K562 (cell line): ENCODE measurements at regions of chr15 and their contacts with region 1.

Region 1: DNA sequence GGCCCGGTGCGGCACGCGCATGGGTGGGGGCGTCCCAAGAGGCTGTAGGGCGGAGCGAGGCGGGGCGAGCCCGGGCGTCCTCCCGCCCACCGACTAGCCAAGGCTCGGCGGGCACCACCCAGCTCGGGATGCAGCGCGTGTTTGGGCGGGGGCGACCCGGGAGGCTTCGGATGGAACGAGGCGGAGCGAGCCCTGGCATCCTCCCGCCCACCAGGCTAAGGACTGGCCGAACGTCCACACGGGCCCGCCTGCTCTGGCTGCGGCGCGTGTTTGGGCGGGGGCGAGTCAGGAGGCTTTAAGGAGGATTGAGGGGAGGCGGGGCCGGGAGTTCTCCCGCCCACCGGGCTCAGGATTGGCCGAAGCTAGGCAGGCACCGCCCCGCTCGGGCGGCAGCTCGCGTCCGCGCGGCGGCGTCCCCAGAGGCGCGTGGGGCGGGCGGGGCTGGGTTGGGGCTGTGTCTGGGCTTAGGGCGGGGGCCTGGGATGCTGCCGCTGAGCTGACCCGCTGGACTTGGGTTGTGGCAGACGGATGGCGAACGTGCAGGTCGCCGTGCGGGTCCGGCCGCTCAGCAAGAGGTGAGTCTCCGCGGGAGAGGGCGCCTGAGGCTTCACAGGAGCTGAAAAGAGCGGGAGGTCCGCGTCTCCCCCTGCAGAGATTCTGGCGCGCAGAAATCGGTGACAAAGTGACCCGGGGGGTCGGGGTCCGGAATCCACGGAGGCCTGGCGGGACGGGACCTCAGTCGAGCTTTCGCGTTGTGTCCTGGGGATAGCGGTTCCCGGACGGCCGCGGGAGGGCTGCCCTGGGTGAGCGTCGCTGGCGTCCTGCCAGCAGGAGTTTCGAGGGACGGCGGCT is at the start of gene STARD9:
- DNase-seq: peak; percentile 94 to 98 (median 96)
- ATAC-seq: peak; percentile 96
- H3K4me3 ChIP-seq: peak within 1 kb of the TSS; percentile 51
- H3K27ac ChIP-seq: peak within 1 kb of the TSS; percentile 69
- H3K4me1 ChIP-seq: peaks cover 18 to 28% of the 10 kb centered on the region in 2 experiments; a peak in 4 of 5 replicates
- H3K27me3 ChIP-seq: no peaks in the 10 kb centered on the region
- CTCF ChIP-seq: no peak
- EP300 ChIP-seq: no peak
- POLR2A ChIP-seq: peak; percentile 74
- RAD21 ChIP-seq: no peak; a peak in 1 of 4 replicates
- polyA plus RNA-seq, gene STARD9: 0.45 to 0.71 TPM

Region 2: GRCh38 chr15:42465520-42466259 is 109.7 kb before region 1 on chr15:
- CTCF ChIA-PET with region 1: no interaction called
- POLR2A ChIA-PET with region 1: no interaction called
- in situ Hi-C with region 1: no loop called
- intact Hi-C with region 1: no loop called
- DNase-seq: no peak
- ATAC-seq: no peak
- H3K4me3 ChIP-seq: no peak overlapping the region
- H3K27ac ChIP-seq: no peak overlapping the region
- H3K4me1 ChIP-seq: no peaks in the 10 kb centered on the region
- H3K27me3 ChIP-seq: no peaks in the 10 kb centered on the region
- CTCF ChIP-seq: no peak
- EP300 ChIP-seq: no peak
- POLR2A ChIP-seq: no peak
- RAD21 ChIP-seq: no peak

Region 3: GRCh38 chr15:42558739-42559138 is 16.7 kb before region 1 on chr15:
- CTCF ChIA-PET with region 1: no interaction called
- POLR2A ChIA-PET with region 1: interaction called, 26 read pairs
- in situ Hi-C with region 1: no loop called
- intact Hi-C with region 1: no loop called
- DNase-seq: no peak
- ATAC-seq: no peak
- H3K4me3 ChIP-seq: no peak overlapping the region
- H3K27ac ChIP-seq: no peak overlapping the region
- H3K4me1 ChIP-seq: peaks cover 0 to under 1% of the 10 kb centered on the region in 2 experiments; a peak in 1 of 5 replicates
- H3K27me3 ChIP-seq: no peaks in the 10 kb centered on the region
- CTCF ChIP-seq: no peak
- EP300 ChIP-seq: no peak
- POLR2A ChIP-seq: no peak
- RAD21 ChIP-seq: no peak

Region 4: GRCh38 chr15:42650208-42651066 is 75.0 kb after region 1 on chr15:
- CTCF ChIA-PET with region 1: no interaction called
- POLR2A ChIA-PET with region 1: no interaction called
- in situ Hi-C with region 1: no loop called
- intact Hi-C with region 1: loop called (anchors 2 kb)
- DNase-seq: peak; percentile 57 to 85 (median 68)
- ATAC-seq: peak; percentile 100
- H3K4me3 ChIP-seq: no peak overlapping the region
- H3K27ac ChIP-seq: no peak overlapping the region
- H3K4me1 ChIP-seq: peaks cover 0 to 3% of the 10 kb centered on the region in 2 experiments; a peak in 2 of 5 replicates
- H3K27me3 ChIP-seq: no peaks in the 10 kb centered on the region
- CTCF ChIP-seq: peak; percentile 74 to 89 (median 83)
- EP300 ChIP-seq: no peak
- POLR2A ChIP-seq: no peak
- RAD21 ChIP-seq: peak; percentile 87 to 95